HEK293 (cell line): ENCODE measurements at regions of chr9 and their contacts with region 1.

Region 1: GRCh38 chr9:83334320-83334719 is 203.9 kb downstream of the FRMD3 start:
- H3K4me3 ChIP-seq: no peak overlapping the region
- H3K27ac ChIP-seq: no peak overlapping the region
- H3K4me1 ChIP-seq: no peaks in the 10 kb centered on the region
- CTCF ChIP-seq: peak; percentile 45; the same call in 1 of the 2 replicates

Region 2: DNA sequence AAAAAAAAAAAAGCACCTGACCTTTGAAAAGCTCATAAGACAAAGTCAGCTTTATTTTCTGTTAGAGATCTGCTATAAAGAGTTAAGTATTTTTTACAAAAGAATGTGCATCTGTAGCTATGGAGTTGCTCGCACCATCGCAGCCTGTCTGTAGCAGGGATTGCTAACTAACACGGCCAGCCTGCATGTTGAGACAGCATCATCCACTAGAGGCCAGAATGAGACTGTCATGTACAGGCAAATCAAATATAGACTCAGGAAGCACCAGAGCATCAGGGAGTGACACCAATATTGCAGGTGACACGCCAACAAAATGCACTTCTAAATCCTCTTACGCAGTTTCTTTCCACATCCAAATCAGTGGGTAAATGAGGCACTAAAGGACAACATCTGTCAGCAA is 135.1 kb before region 1 on chr9:
- CTCF ChIA-PET with region 1: interaction called, 15 read pairs
- POLR2A ChIA-PET with region 1: no interaction called
- H3K4me3 ChIP-seq: no peak overlapping the region
- H3K27ac ChIP-seq: no peak overlapping the region
- H3K4me1 ChIP-seq: 0 out of 2 replicates have a peak, but pooled peaks cover 2% of the 10 kb centered on the region
- CTCF ChIP-seq: no peak

Region 3: DNA sequence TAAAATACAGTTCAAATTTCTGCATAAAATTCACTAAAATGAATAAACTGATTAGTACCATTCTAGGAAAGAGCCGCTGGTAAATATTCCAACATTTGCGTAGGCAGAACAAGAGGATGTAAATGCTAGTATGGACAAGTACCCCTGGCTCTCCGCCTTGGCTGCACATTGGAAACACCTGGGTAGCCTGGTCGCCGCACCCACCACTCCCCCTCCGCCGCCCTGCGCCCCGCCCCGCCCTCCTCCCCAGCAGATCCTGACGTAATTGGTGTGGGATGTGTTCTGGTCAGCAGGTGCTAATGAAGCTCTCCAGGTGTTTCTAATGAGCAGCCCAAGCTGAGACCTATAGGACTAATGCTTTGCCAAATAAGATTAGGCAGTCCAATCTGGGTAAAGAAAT is 21.8 kb before region 1 on chr9:
- CTCF ChIA-PET with region 1: interaction called, 13 read pairs
- POLR2A ChIA-PET with region 1: no interaction called
- H3K4me3 ChIP-seq: no peak overlapping the region
- H3K27ac ChIP-seq: no peak overlapping the region
- H3K4me1 ChIP-seq: no peaks in the 10 kb centered on the region
- CTCF ChIP-seq: no peak

Region 4: DNA sequence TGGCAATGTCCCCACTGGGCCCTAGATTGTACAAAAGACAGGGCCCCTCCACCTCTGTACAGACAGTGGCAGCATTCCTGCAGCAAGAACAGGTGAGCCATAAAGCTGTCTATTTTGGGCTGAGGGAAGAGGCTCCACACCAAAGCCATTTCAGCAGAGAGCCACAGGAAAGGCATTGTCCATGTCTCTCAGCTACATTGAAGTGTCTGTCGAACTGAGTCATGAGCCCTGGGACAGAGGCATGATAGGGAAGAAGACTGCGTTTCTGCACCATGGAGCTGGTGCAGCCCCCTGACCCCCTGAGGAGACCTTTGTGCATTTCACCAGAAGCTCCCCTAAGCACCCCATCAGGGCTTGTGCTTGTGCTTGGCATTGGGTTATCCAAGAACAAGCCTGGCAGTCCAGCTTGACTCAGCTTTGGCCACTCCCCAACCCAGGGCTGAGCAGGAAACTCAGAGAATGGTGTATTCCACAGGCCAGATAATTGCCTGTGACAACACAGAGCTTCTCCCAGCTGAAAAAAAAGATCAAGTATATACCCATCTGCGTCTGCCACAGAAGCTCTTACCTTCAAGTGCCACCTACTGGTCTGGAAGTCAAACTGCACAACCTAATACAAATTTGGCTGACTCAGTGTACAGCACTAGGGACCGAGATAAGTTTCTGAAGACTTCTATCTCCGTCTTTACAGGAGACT is 209.8 kb after region 1 on chr9:
- CTCF ChIA-PET with region 1: interaction called, 91 read pairs
- POLR2A ChIA-PET with region 1: interaction called, 4 read pairs
- H3K4me3 ChIP-seq: no peak overlapping the region
- H3K27ac ChIP-seq: no peak overlapping the region
- H3K4me1 ChIP-seq: no peaks in the 10 kb centered on the region
- CTCF ChIP-seq: no peak

Region 5: GRCh38 chr9:83649080-83649479 is 314.8 kb after region 1 on chr9:
- CTCF ChIA-PET with region 1: interaction called, 15 read pairs
- POLR2A ChIA-PET with region 1: no interaction called
- H3K4me3 ChIP-seq: no peak overlapping the region
- H3K27ac ChIP-seq: no peak overlapping the region
- H3K4me1 ChIP-seq: no peaks in the 10 kb centered on the region
- CTCF ChIP-seq: no peak